CD8-positive, alpha-beta T cell (primary cell): ENCODE measurements at regions of chr20 and their contacts with region 1.

Region 1: DNA sequence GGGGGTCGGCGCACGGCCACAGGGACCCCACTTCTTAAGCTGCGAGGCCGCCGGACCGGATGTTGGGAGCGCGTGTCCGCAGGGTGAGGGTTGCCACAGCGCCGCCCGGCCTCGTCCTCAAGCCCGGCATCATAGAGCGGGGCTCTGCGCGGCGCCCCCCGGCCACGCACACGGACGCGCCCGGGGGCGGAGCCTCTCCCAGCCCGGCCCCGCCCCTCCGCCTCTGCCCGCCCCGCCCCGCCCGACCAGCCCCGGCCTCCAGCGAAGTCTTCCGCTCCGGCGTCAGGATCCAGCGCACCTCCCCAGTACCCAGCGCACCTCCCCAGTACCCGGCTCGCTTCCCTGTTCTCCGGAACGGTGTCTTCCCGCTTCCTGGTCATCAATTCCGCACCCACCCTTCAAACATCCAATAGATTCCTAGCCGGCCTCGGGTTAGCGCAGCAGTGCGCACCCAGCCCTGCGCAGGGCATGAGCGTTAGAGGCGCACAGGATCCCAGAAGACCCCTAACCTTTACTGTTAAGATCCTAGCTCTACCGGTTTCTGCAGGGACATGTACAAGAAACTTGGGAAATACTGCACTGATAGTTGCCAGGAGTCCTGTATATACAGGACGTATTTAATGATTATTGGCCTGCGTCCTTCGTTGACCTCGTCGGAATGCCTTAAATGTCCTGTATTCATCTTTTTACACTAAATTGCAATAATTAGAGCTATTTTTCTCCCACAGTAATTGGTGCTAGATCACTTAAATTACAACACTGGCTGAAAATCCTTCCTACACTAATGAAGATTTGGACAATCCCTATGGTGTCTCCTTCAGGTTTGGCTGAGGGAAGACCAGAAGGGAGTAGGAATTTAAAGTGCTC is 535 bp upstream of the DNAAF9 start:
- DNase-seq: peak; percentile 40 to 87 (median 69)
- ATAC-seq: peak; percentile 67
- H3K4me3 ChIP-seq: peak overlapping the region; percentile 74 to 86
- H3K4me3 Mint-ChIP-seq: peak overlapping the region; percentile 99
- H3K27ac ChIP-seq: peak overlapping the region; percentile 53 to 59
- H3K27ac Mint-ChIP-seq: peak overlapping the region; percentile 94
- H3K4me1 ChIP-seq: peaks cover 6% of the 10 kb centered on the region
- H3K4me1 Mint-ChIP-seq: peaks cover 25% of the 10 kb centered on the region
- H3K27me3 ChIP-seq: peaks cover 0 to 1% of the 10 kb centered on the region in 2 experiments
- H3K27me3 Mint-ChIP-seq: no peaks in the 10 kb centered on the region
- CTCF ChIP-seq: no peak

Region 2: GRCh38 chr20:2470423-2471193 is 937.4 kb before region 1 on chr20 and contains the start of gene SNRPB:
- CTCF ChIA-PET with region 1: no interaction called
- POLR2A ChIA-PET with region 1: no interaction called
- intact Hi-C with region 1: loop called in 1 of 2 experiments (anchors 2 kb)
- DNase-seq: peak; percentile 93 to 99 (median 97)
- ATAC-seq: peak; percentile 93
- H3K4me3 ChIP-seq: peak within 1 kb of the TSS; percentile 76 to 99
- H3K4me3 Mint-ChIP-seq: peak within 1 kb of the TSS; percentile 99
- H3K27ac ChIP-seq: peak within 1 kb of the TSS; percentile 95 to 99
- H3K27ac Mint-ChIP-seq: peak within 1 kb of the TSS; percentile 98
- H3K4me1 ChIP-seq: peaks cover 21% of the 10 kb centered on the region
- H3K4me1 Mint-ChIP-seq: peaks cover 44% of the 10 kb centered on the region
- H3K27me3 ChIP-seq: no peaks in the 10 kb centered on the region
- H3K27me3 Mint-ChIP-seq: no peaks in the 10 kb centered on the region
- CTCF ChIP-seq: no peak
- total RNA-seq, gene SNRPB: 176 to 180 TPM

Region 3: DNA sequence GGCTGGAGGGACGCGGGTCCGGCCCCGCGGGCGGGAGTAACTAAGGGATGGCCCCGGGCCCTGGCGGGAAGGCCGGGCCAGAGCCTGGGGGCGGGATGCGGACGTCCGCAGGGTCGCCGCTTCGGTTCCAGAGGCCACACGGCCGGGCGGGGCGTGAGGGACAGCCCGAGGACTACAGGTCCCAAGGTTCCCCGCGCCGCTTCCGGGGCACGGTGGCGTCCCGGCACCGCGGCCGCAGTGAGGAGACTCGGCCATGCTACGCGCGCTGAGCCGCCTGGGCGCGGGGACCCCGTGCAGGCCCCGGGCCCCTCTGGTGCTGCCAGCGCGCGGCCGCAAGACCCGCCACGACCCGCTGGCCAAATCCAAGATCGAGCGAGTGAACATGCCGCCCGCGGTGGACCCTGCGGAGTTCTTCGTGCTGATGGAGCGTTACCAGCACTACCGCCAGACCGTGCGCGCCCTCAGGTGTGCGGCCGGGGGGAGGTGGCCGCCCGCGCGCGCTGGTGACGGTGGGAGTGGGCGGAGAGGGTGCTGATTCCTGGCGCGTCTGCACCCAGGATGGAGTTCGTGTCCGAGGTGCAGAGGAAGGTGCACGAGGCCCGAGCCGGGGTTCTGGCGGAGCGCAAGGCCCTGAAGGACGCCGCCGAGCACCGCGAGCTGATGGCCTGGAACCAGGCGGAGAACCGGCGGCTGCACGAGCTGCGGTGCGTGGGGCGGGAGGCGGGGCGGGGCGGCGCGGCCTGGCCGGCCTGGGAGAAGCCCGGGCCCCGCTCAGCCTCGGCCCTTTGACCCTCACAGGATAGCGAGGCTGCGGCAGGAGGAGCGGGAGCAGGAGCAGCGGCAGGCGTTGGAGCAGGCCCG is 362.0 kb before region 1 on chr20 and contains the start of gene MRPS26:
- CTCF ChIA-PET with region 1: no interaction called
- POLR2A ChIA-PET with region 1: interaction called, 4 read pairs
- intact Hi-C with region 1: loop called in 1 of 2 experiments (anchors 10 kb)
- DNase-seq: peak; percentile 48 to 87 (median 76)
- ATAC-seq: peak; percentile 85
- H3K4me3 ChIP-seq: peak within 1 kb of the TSS; percentile 72 to 95
- H3K4me3 Mint-ChIP-seq: peak within 1 kb of the TSS; percentile 82
- H3K27ac ChIP-seq: peak within 1 kb of the TSS; percentile 66 to 71
- H3K27ac Mint-ChIP-seq: peak within 1 kb of the TSS; percentile 76
- H3K4me1 ChIP-seq: peaks cover 15% of the 10 kb centered on the region
- H3K4me1 Mint-ChIP-seq: peaks cover 19% of the 10 kb centered on the region
- H3K27me3 ChIP-seq: no peaks in the 10 kb centered on the region
- H3K27me3 Mint-ChIP-seq: no peaks in the 10 kb centered on the region
- CTCF ChIP-seq: no peak
- total RNA-seq, gene MRPS26: 16.5 to 19.5 TPM

Region 4: GRCh38 chr20:3420211-3420707 is 12.3 kb after region 1 on chr20:
- CTCF ChIA-PET with region 1: no interaction called
- POLR2A ChIA-PET with region 1: interaction called, 11 read pairs
- intact Hi-C with region 1: no loop called
- DNase-seq: peak in 4 of 9 experiments; percentile 14 to 63 (median 42)
- ATAC-seq: peak; percentile 95
- H3K4me3 ChIP-seq: no peak overlapping the region
- H3K4me3 Mint-ChIP-seq: no peak overlapping the region
- H3K27ac ChIP-seq: peak overlapping the region in 1 of 2 experiments; percentile 55
- H3K27ac Mint-ChIP-seq: no peak overlapping the region
- H3K4me1 ChIP-seq: no peaks in the 10 kb centered on the region
- H3K4me1 Mint-ChIP-seq: peaks cover 7% of the 10 kb centered on the region
- H3K27me3 ChIP-seq: peaks cover 0 to 3% of the 10 kb centered on the region in 2 experiments
- H3K27me3 Mint-ChIP-seq: no peaks in the 10 kb centered on the region
- CTCF ChIP-seq: no peak

Region 5: GRCh38 chr20:3494223-3494622 is 86.2 kb after region 1 on chr20:
- CTCF ChIA-PET with region 1: no interaction called
- POLR2A ChIA-PET with region 1: no interaction called
- intact Hi-C with region 1: no loop called
- DNase-seq: no peak
- ATAC-seq: no peak
- H3K4me3 ChIP-seq: no peak overlapping the region
- H3K4me3 Mint-ChIP-seq: no peak overlapping the region
- H3K27ac ChIP-seq: no peak overlapping the region
- H3K27ac Mint-ChIP-seq: no peak overlapping the region
- H3K4me1 ChIP-seq: no peaks in the 10 kb centered on the region
- H3K4me1 Mint-ChIP-seq: peaks cover 6% of the 10 kb centered on the region
- H3K27me3 ChIP-seq: no peaks in the 10 kb centered on the region
- H3K27me3 Mint-ChIP-seq: no peaks in the 10 kb centered on the region
- CTCF ChIP-seq: no peak

Region 6: GRCh38 chr20:3781153-3781910 is 373.3 kb after region 1 on chr20 and contains the start of gene SPEF1:
- CTCF ChIA-PET with region 1: no interaction called
- POLR2A ChIA-PET with region 1: no interaction called
- intact Hi-C with region 1: loop called in 1 of 2 experiments (anchors 10 kb)
- DNase-seq: peak in 5 of 9 experiments; percentile 37 to 82 (median 39)
- ATAC-seq: peak; percentile 43
- H3K4me3 ChIP-seq: peak within 1 kb of the TSS in 1 of 2 experiments; percentile 26
- H3K4me3 Mint-ChIP-seq: peak within 1 kb of the TSS; percentile 46
- H3K27ac ChIP-seq: peak within 1 kb of the TSS in 1 of 2 experiments; percentile 16
- H3K27ac Mint-ChIP-seq: peak within 1 kb of the TSS; percentile 27
- H3K4me1 ChIP-seq: peaks cover 43% of the 10 kb centered on the region
- H3K4me1 Mint-ChIP-seq: peaks cover 37% of the 10 kb centered on the region
- H3K27me3 ChIP-seq: peaks cover 0 to 3% of the 10 kb centered on the region in 2 experiments
- H3K27me3 Mint-ChIP-seq: peaks cover 5% of the 10 kb centered on the region
- CTCF ChIP-seq: no peak
- total RNA-seq, gene SPEF1: 0.16 TPM in 1 of 2 experiments, not detected in the other